Aorta (tissue), 5 donors: ENCODE measurements at regions of chr16 and their contacts with region 1.

Region 1: GRCh38 chr16:69861292-69862030 is 89.7 kb upstream of the CLEC18A start:
- DNase-seq: peak in 1 of 2 donors; percentile 66
- ATAC-seq: peak; percentile 88
- H3K4me3 ChIP-seq: no peak overlapping the region
- H3K27ac ChIP-seq: peak overlapping the region; percentile 90 to 96
- H3K4me1 ChIP-seq: peaks cover 4 to 10% of the 10 kb centered on the region in 2 donors
- H3K27me3 ChIP-seq: no peaks in the 10 kb centered on the region

Region 2: DNA sequence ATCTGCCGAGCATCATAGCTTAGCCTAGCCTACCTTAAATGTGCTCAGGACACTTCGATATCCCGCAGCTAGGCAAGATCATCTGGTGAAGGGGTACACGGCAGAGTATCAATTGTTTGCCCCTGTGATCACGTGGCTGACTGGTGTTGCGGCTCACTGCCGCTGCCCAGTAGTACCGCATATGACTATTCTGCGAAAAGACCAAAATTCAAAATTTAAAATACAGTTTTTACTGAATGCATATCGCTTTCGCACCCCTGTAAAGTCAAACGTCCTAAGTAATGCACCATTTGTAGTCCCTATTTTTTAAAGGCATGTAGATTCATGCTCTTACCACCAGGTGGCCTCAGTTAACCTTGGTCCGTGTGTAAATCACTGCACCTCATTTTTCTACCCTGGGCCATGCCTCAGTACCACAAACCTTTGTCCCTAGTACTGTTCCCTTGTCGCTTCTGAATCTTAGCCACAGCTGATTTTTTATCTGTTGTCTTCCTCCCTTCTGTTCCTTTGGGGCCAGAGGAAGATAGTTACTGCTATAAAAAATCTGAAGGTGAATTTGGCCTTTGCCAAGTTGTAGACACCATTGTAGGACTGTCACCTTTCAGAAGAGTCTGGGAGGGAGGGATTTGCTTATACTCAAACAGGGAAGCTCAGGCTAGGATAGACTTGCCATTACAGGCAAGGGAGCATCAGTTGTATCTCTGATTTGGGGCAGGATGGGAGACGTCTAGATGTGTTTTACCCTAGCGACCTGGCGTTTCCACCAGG is 64.9 kb before region 1 on chr16:
- intact Hi-C with region 1: loop called (anchors 5 kb)
- DNase-seq: no peak
- ATAC-seq: peak; percentile 90
- H3K4me3 ChIP-seq: no peak overlapping the region
- H3K27ac ChIP-seq: no peak overlapping the region
- H3K4me1 ChIP-seq: no peaks in the 10 kb centered on the region
- H3K27me3 ChIP-seq: no peaks in the 10 kb centered on the region

Region 3: GRCh38 chr16:69833357-69834282 is 27.8 kb before region 1 on chr16:
- intact Hi-C with region 1: no loop called
- DNase-seq: no peak
- ATAC-seq: peak; percentile 14
- H3K4me3 ChIP-seq: no peak overlapping the region
- H3K27ac ChIP-seq: no peak overlapping the region
- H3K4me1 ChIP-seq: peaks cover 5 to 8% of the 10 kb centered on the region in 2 donors
- H3K27me3 ChIP-seq: no peaks in the 10 kb centered on the region

Region 4: GRCh38 chr16:69924777-69925191 is 63.3 kb after region 1 on chr16:
- intact Hi-C with region 1: loop called (anchors 2 kb)
- DNase-seq: peak; percentile 89 to 93
- ATAC-seq: peak; percentile 84
- H3K4me3 ChIP-seq: peak overlapping the region; percentile 89 to 92
- H3K27ac ChIP-seq: peak overlapping the region; percentile 79 to 99
- H3K4me1 ChIP-seq: peaks cover 2 to 7% of the 10 kb centered on the region in 2 donors
- H3K27me3 ChIP-seq: no peaks in the 10 kb centered on the region

Region 5: DNA sequence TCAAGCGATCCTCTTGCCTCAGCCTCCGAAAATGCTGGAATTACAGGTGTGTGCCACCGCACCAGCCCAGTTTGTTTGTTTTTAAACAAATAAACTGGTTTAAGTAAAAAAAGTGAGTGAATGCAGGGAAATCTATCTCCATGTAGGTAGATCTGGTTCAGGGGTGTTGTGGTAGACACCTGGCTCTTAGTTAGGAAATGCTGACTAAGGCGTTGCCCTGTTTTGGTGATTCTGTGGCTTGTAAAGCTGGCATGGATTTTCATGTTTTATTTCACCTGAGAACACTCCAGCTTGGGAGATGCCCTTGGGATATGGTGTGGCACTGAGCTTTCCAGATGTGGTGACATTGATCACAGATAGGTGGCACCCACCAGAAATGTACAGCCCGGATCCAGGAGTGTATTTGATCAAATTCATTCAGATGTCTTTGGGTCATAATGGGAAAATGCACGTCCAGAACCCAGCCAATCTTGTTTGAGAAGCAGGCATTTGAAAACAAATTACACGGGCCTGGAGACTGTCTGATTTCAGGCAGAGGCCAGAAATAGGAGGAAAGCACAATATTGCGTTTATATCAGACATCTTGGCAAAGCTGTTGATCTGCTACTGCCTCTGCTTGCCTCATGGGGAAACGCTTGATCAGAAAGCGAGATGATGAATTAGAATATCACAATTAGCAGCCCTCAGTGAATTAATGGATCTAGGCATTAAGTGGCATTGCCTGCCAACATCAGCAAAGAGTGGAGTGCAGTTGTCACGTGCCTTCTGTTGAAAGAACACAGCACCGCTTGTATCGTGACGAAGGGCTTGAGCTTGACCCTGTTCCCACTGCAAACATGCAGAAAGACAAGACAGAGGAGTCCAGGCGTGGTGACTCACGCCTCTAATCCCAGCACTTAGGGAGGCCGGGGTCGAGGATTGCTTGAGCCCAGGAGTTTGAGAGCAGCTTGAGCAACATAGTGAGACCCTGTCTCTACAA is 777.6 kb after region 1 on chr16:
- intact Hi-C with region 1: no loop called
- DNase-seq: no peak
- ATAC-seq: peak; percentile 60
- H3K4me3 ChIP-seq: no peak overlapping the region
- H3K27ac ChIP-seq: peak overlapping the region; percentile 32 to 64
- H3K4me1 ChIP-seq: peaks cover 0 to 8% of the 10 kb centered on the region in 2 donors
- H3K27me3 ChIP-seq: no peaks in the 10 kb centered on the region